Breast epithelium (tissue), 4 donors: ENCODE measurements at regions of chr2 and their contacts with region 1.

Region 1: GRCh38 chr2:2690985-2691384 is 359.9 kb upstream of the MYT1L start:
- DNase-seq: no peak
- H3K4me3 ChIP-seq: no peak overlapping the region
- H3K27ac ChIP-seq: no peak overlapping the region
- H3K4me1 ChIP-seq: no peaks in the 10 kb centered on the region
- H3K27me3 ChIP-seq: peaks cover 0 to 43% of the 10 kb centered on the region in 2 donors
- CTCF ChIP-seq: no peak
- POLR2A ChIP-seq: no peak

Region 2: DNA sequence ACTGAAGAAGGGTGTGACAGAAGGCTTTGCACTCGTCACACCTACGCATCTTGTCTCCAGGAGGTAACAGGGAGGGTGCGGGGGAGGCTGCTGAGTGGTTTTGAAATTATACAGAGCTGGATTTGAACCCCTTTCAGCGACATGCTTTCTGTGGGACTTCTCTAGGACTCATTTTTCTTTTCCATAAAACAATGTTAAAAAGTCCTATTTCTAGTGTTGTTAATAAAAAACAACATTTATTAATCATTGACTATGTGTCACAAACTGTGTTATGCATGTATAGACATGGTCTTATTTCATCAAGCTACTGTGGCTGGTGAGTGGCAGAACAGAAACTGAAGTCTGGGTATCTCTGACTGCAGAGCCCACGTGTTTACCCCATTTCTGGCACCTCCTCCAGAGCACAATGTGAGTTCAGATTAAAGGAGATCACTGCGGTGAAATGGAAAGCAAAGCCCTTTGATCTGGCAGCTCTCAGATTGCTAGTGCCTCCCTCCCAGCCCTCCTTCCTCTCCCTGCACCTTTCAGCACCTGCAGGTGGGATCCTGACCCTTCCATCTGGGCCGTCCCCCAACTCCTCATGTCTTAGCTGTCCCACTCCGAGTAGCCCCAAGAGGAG is 44.4 kb before region 1 on chr2:
- intact Hi-C with region 1: no loop called
- DNase-seq: no peak
- H3K4me3 ChIP-seq: no peak overlapping the region
- H3K27ac ChIP-seq: no peak overlapping the region
- H3K4me1 ChIP-seq: no peaks in the 10 kb centered on the region
- H3K27me3 ChIP-seq: peaks cover 0 to 22% of the 10 kb centered on the region in 2 donors
- CTCF ChIP-seq: no peak
- POLR2A ChIP-seq: no peak

Region 3: GRCh38 chr2:3677436-3677835 is 986.5 kb after region 1 on chr2:
- intact Hi-C with region 1: loop called (anchors 5 kb)
- DNase-seq: no peak
- H3K4me3 ChIP-seq: no peak overlapping the region
- H3K27ac ChIP-seq: no peak overlapping the region
- H3K4me1 ChIP-seq: no peaks in the 10 kb centered on the region
- H3K27me3 ChIP-seq: peaks cover 0 to 3% of the 10 kb centered on the region in 2 donors
- CTCF ChIP-seq: no peak
- POLR2A ChIP-seq: no peak

Region 4: GRCh38 chr2:3899536-3900155 is 1208.7 kb after region 1 on chr2:
- intact Hi-C with region 1: loop called (anchors 5 kb)
- DNase-seq: no peak
- H3K4me3 ChIP-seq: no peak overlapping the region
- H3K27ac ChIP-seq: no peak overlapping the region
- H3K4me1 ChIP-seq: no peaks in the 10 kb centered on the region
- H3K27me3 ChIP-seq: no peaks in the 10 kb centered on the region
- CTCF ChIP-seq: no peak
- POLR2A ChIP-seq: no peak